Natural killer cell (primary cell): ENCODE measurements at regions of chr11 and their contacts with region 1.

Region 1: DNA sequence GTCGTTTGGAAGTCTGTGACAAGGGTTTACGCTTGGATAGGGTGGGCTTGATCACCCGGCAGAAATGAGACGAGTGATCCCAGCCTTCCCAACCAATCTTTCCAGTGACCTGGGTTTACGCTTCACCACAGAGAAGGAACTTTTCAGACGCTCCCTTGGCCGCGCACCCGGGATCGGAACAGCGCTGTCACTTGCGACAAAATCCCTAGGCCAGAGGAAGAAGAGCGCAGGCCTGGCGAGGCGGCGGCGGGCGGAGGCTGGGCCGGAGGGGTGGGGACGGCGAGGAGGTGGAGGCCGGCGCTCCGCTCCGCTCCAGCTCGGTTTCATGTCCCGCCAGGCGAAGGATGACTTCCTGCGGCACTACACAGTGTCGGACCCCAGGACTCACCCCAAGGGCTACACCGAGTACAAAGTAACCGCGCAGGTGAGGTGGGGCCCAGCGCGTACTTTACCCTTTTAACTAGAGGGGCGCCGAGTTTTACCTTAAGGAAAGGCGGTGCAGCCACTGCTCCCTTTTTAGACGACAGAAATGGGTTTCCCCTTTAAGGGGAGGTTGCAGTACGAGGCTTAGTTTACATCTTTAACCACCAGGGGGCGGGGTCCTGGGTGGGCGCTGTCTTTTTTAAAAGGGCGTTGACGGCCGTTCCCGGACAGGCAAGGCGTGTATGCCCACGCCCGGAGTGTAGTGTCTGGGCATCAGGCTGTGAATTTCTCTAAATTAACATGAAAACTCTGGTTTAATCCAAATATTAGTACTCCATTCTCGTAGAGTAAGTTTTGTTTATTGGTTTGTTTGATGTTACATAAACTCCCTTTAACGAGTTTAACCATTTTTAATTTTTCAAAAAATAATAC is at the start of gene SNX15:
- DNase-seq: peak; percentile 80 to 96
- ATAC-seq: peak; percentile 93 to 98 (median 95)
- H3K4me3 ChIP-seq: peak within 1 kb of the TSS; percentile 44
- H3K4me3 Mint-ChIP-seq: peak within 1 kb of the TSS; percentile 87
- H3K27ac ChIP-seq: peak within 1 kb of the TSS; percentile 67
- H3K27ac Mint-ChIP-seq: peak within 1 kb of the TSS; percentile 78 to 84
- H3K4me1 ChIP-seq: peaks cover 15% of the 10 kb centered on the region
- H3K4me1 Mint-ChIP-seq: peaks cover 14 to 24% of the 10 kb centered on the region in 2 donors
- H3K27me3 ChIP-seq: no peaks in the 10 kb centered on the region
- H3K27me3 Mint-ChIP-seq: no peaks in the 10 kb centered on the region
- CTCF ChIP-seq: peak; percentile 79
- total RNA-seq, gene SNX15: 16.9 to 28.1 (median 27.1) TPM

Region 2: DNA sequence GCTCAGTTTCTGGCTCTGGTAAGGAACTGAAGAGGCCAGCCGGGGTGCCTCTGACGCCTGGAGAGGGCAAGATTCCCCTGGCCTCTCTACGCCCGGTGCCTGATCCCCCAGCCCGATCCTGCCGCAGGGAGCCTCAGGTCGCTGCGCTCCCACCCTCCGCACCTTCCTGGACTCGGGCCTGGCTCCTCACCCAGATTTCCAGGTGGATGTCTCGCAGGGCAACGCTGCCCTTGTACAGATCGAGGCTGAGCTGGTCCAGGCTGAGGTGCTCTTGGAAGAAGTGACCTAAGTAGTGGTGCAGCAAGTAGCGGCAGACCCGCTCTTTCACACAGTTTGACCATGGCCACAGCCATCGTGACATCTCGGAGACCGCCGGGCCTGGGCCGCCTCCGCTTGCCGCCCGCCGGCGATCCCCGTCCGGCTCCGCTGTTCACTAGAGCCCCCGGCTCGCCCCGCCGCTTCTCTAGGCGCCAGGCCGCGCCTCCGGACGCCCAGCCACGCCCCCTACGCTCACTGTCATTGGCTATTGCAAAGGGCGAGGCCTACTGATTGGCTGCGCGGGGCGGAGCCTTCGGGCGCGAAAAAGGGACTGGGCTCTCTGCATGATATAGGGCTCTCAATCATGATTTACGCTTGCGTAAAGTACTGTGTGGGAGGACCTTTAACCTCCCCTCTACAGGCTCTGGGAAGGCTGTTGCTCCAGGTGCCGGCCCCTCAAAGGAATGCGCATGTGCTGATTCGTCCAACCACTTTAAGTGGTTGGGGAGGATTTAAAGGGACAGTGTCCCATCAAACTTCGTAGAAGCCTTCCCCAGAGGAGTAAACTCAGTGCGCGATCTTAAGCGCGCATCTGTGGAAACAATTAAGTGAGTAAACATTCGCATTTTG is 110.4 kb before region 1 on chr11 and contains the start of gene ATG2A:
- intact Hi-C with region 1: loop called (anchors 5 kb)
- DNase-seq: peak; percentile 99
- ATAC-seq: peak; percentile 87 to 98 (median 91)
- H3K4me3 ChIP-seq: peak within 1 kb of the TSS; percentile 91
- H3K4me3 Mint-ChIP-seq: peak within 1 kb of the TSS; percentile 88
- H3K27ac ChIP-seq: peak within 1 kb of the TSS; percentile 89
- H3K27ac Mint-ChIP-seq: peak within 1 kb of the TSS; percentile 91 to 96
- H3K4me1 ChIP-seq: peaks cover 31% of the 10 kb centered on the region
- H3K4me1 Mint-ChIP-seq: peaks cover 15 to 28% of the 10 kb centered on the region in 2 donors
- H3K27me3 ChIP-seq: no peaks in the 10 kb centered on the region
- H3K27me3 Mint-ChIP-seq: no peaks in the 10 kb centered on the region
- CTCF ChIP-seq: no peak
- total RNA-seq, gene ATG2A: 165 to 321 (median 259) TPM

Region 3: DNA sequence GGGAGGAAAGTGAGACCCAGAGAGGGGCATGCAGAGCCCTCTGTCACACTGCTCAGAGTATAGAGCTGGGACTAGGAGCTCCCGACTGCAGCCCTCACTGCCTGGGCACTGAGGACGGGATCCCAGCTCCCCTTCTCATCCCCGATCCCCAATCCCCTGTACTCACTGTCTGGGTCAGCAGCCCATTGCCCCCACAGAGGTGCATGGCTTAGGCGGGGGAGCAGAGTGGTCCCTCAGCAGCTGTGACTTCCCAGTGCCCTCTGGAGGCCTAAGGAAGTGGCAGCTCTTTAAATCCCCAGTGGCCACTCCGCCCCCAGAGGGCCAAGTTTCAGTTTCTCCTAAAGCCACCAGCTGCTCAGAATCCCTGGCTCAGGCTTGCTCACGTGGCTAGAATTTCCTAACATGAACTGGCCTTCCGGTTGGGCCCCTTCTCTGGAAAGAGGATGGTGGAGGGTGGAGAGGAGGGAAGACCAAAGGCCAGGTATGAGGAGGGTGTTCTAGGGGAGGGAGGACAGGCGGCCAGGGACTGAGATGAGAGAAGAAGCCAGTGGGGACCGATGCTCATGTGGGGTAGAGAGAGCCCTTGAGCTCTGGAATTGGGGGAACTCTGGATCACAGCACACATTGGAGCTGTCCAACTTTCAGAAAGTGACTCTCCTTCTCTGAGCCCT is 30.6 kb before region 1 on chr11 and contains the start of gene BATF2:
- intact Hi-C with region 1: no loop called
- DNase-seq: peak in 1 of 2 donors; percentile 33
- ATAC-seq: peak; percentile 54 to 61 (median 58)
- H3K4me3 ChIP-seq: peak within 1 kb of the TSS; percentile 0
- H3K4me3 Mint-ChIP-seq: no peak within 1 kb of the TSS
- H3K27ac ChIP-seq: no peak within 1 kb of the TSS
- H3K27ac Mint-ChIP-seq: peak within 1 kb of the TSS in 1 of 2 donors; percentile 53
- H3K4me1 ChIP-seq: peaks cover 8% of the 10 kb centered on the region
- H3K4me1 Mint-ChIP-seq: peaks cover 0 to 9% of the 10 kb centered on the region in 2 donors
- H3K27me3 ChIP-seq: no peaks in the 10 kb centered on the region
- H3K27me3 Mint-ChIP-seq: no peaks in the 10 kb centered on the region
- CTCF ChIP-seq: no peak
- total RNA-seq, gene BATF2: 0.30 TPM in 1 of 3 donors, not detected in the others

Region 4: GRCh38 chr11:65013692-65014145 is 13.7 kb before region 1 on chr11:
- intact Hi-C with region 1: loop called (anchors 1 kb)
- DNase-seq: peak in 1 of 2 donors; percentile 94
- ATAC-seq: peak; percentile 85 to 94 (median 87)
- H3K4me3 ChIP-seq: peak overlapping the region; percentile 93
- H3K4me3 Mint-ChIP-seq: peak overlapping the region; percentile 95
- H3K27ac ChIP-seq: peak overlapping the region; percentile 100
- H3K27ac Mint-ChIP-seq: peak overlapping the region; percentile 95 to 96
- H3K4me1 ChIP-seq: peaks cover 26% of the 10 kb centered on the region
- H3K4me1 Mint-ChIP-seq: peaks cover 21 to 29% of the 10 kb centered on the region in 2 donors
- H3K27me3 ChIP-seq: no peaks in the 10 kb centered on the region
- H3K27me3 Mint-ChIP-seq: no peaks in the 10 kb centered on the region
- CTCF ChIP-seq: no peak

Region 5: DNA sequence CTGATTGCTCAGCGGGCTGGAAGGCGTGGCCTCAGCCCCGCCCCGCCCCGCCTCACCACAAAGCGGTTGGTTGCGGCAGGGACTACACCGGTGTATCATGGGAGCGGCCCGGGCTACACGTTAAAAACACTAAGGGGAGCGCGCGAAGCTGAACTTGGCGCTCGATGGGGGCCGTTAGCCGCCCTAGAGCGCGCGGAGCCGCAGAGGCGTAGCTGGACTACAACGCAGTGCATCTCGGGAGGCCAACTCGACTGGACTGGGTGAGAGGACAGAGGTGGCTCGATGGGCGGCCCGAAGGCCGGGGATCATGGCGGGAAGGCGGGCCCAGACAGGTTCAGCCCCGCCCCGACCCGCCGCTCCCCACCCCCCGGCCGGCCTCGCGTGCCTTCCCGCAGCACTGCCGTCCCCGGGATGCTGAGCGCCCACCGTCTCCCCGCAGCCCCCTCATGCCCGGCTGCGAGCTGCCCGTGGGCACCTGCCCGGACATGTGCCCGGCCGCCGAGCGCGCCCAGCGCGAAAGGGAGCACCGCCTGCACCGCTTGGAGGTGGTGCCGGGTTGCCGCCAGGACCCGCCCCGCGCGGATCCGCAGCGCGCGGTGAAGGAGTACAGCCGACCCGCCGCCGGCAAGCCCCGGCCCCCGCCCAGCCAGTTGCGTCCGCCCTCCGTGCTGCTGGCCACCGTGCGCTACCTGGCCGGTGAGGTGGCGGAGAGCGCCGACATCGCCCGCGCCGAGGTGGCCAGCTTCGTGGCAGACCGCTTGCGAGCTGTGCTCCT is 13.6 kb after region 1 on chr11 and contains the start of gene SAC3D1:
- intact Hi-C with region 1: loop called (anchors 1 kb)
- DNase-seq: peak; percentile 81 to 92
- ATAC-seq: peak; percentile 95 to 98 (median 95)
- H3K4me3 ChIP-seq: peak within 1 kb of the TSS; percentile 61
- H3K4me3 Mint-ChIP-seq: peak within 1 kb of the TSS; percentile 90
- H3K27ac ChIP-seq: peak within 1 kb of the TSS; percentile 80
- H3K27ac Mint-ChIP-seq: peak within 1 kb of the TSS; percentile 82 to 86
- H3K4me1 ChIP-seq: peaks cover 19% of the 10 kb centered on the region
- H3K4me1 Mint-ChIP-seq: peaks cover 6 to 19% of the 10 kb centered on the region in 2 donors
- H3K27me3 ChIP-seq: no peaks in the 10 kb centered on the region
- H3K27me3 Mint-ChIP-seq: no peaks in the 10 kb centered on the region
- CTCF ChIP-seq: no peak
- total RNA-seq, gene SAC3D1: 2.0 to 3.5 (median 2.8) TPM

Region 6: DNA sequence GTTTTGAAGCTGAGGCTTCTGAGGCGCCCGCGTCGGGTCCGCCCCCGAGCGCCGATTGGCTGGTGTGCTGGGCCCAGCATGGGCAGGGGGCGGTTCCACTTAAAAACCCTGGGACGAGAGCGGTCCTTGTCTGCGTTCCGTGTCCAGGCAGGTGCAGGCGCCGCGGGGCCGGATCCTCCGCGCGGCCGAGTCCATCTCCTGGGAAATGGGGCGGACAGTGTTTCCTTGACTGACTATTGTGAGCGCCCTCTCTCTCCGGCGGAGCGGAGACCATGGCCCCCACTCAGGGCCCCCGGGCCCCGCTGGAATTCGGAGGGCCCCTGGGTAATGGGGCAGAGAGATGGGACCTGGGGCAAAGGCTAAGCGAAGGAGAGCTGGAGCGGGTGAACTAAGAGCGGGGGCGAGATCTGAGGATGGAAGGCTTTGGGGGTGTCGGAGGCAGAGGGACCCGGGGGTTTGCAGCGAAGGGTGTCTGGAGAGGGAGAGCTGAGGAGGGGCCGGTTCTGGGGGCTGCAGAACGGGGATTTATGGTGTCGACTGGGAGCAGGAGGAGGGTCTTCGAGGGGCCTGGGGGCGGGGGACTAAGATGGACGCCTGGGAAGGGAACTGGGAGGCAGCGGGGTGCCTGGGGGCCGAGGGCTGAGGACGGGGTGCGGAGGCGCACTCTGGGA is 84.4 kb after region 1 on chr11 and contains the start of gene TM7SF2:
- intact Hi-C with region 1: loop called (anchors 5 kb)
- DNase-seq: peak; percentile 94 to 96
- ATAC-seq: peak; percentile 76 to 87 (median 82)
- H3K4me3 ChIP-seq: peak within 1 kb of the TSS; percentile 62
- H3K4me3 Mint-ChIP-seq: peak within 1 kb of the TSS; percentile 96
- H3K27ac ChIP-seq: peak within 1 kb of the TSS; percentile 58
- H3K27ac Mint-ChIP-seq: peak within 1 kb of the TSS; percentile 91 to 97
- H3K4me1 ChIP-seq: peaks cover 59% of the 10 kb centered on the region
- H3K4me1 Mint-ChIP-seq: peaks cover 35% of the 10 kb centered on the region in 2 donors
- H3K27me3 ChIP-seq: no peaks in the 10 kb centered on the region
- H3K27me3 Mint-ChIP-seq: no peaks in the 10 kb centered on the region
- CTCF ChIP-seq: no peak
- total RNA-seq, gene TM7SF2: 17.0 to 23.2 (median 18.6) TPM